ENCODE measurements at regions of chr1 and their contacts with region 1.

Region 1: GRCh38 chr1:154870115-154870571 is at the start of gene KCNN3:
- DNase-seq: peak; percentile 82 to 96 (median 94)
- H3K4me3 ChIP-seq: peak within 1 kb of the TSS; percentile 40 to 81 (median 66)
- H3K27ac ChIP-seq: peak within 1 kb of the TSS in 44 of 59 donors; percentile 15 to 83 (median 62)
- H3K27me3 ChIP-seq: no peaks in the 10 kb centered on the region
- CTCF ChIP-seq: peak in 42 of 56 donors; percentile 12 to 66 (median 36)
- total RNA-seq, gene KCNN3: 14.9 to 97.0 (median 32.4) TPM

Region 2: DNA sequence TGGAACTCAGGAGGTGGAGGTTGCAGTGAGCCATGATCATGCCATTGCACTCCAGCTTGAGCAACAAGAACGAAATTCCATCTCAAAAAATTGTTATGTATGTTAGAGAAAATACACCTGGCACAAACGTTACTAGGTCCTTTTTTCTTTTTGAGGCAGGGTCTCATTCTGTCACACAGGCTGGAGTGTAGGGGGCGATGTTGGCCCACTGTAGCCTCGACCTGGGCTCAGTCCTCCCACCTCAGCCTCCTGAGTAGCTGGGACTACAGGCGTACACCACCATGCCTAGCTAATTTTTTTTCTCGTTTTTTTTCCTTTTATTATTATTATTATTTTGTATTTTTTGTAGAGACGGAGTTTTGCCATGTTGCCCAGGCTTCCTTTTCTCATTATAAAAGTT is 593.3 kb before region 1 on chr1:
- intact Hi-C with region 1: no loop called
- DNase-seq: no peak
- H3K4me3 ChIP-seq: no peak overlapping the region
- H3K27ac ChIP-seq: no peak overlapping the region
- H3K27me3 ChIP-seq: no peaks in the 10 kb centered on the region
- CTCF ChIP-seq: peak in 2 of 56 donors; percentile 6 to 15

Region 3: DNA sequence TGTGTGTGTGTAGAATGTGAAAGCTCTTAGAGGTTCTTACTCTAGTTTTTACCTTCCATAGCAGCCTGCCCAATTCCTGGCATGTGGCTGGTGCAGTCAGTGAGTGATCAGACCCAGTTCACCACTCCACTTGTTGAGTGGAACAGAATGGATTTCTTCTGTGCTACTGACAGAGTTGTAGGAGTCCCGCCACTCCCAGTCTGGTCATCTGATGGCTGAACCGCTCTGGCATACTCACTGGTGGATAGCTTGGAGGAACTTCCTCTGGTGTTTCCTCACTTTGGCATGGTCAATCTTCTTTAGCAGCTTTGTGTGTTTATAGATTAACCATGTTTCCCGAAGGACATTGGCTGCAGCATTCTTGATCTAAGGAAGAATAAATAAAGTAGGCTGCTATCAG is 155.5 kb before region 1 on chr1:
- intact Hi-C with region 1: no loop called
- DNase-seq: no peak
- H3K4me3 ChIP-seq: no peak overlapping the region
- H3K27ac ChIP-seq: no peak overlapping the region
- H3K27me3 ChIP-seq: no peaks in the 10 kb centered on the region
- CTCF ChIP-seq: no peak

Region 4: DNA sequence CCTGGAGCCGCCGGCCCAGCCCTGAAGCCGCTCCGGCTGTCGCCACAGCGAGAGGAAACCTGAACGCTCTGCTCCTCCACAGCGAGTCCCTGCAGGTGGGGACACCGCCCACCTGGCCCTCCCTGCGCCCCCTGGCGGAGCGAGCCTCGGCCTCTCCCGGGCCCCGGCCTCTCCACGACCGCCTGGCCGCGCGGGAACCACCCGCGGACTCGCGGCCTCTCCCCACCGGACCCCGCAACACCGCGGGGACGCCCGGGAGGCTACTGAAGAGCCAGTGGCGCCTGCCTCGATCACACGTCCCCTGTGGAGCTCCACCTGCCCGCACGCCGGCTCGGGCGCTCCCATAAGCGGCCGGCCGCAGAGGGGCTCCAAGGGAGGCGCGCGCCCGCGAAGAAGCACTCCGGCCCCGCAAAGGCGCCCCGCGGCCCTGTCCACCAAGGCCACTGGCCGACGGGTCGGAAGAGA is 109.6 kb before region 1 on chr1:
- intact Hi-C with region 1: loop called in 1 of 2 experiments (anchors 5 kb)
- DNase-seq: peak in 2 of 10 donors; percentile 56 to 73
- H3K4me3 ChIP-seq: peak overlapping the region in 56 of 59 donors; percentile 3 to 64 (median 46)
- H3K27ac ChIP-seq: peak overlapping the region in 1 of 59 donors; percentile 52
- H3K27me3 ChIP-seq: peaks cover 0 to 7% (median 0%) of the 10 kb centered on the region in 45 donors
- CTCF ChIP-seq: peak in 54 of 56 donors; percentile 17 to 68 (median 53)

Region 5: GRCh38 chr1:154847891-154848290 is 22.3 kb before region 1 on chr1:
- intact Hi-C with region 1: loop called in 1 of 2 experiments (anchors 1 kb)
- DNase-seq: peak; percentile 68 to 86 (median 82)
- H3K4me3 ChIP-seq: peak overlapping the region in 49 of 59 donors; percentile 7 to 61 (median 34)
- H3K27ac ChIP-seq: peak overlapping the region in 49 of 59 donors; percentile 1 to 84 (median 57)
- H3K27me3 ChIP-seq: no peaks in the 10 kb centered on the region
- CTCF ChIP-seq: no peak

Measured in dorsolateral prefrontal cortex (tissue), 120 donors.